ENCODE measurements at regions of chr12 and their contacts with region 1.

Region 1: DNA sequence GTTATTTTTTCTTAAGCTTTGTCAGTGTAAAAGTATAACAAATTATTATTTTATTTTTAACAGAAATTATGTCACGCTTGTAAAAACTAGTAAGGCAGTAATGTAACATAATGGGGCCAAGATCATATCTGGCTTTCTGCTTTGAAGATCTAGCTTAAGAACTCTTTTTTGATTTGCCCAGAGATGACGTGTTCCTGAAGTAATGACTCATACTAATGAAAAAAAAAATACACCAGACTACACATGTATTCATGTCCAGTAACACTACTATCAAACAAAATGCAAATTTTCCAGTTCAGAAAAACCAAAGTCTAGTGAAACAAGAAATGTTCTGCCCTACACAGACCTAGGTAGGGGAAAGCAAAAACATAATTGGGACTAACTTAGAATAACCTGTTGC is 432.2 kb upstream of the ATXN7L3B start:
- DNase-seq: no peak
- H3K4me3 ChIP-seq: no peak overlapping the region
- H3K27ac ChIP-seq: no peak overlapping the region
- H3K4me1 ChIP-seq: no peaks in the 10 kb centered on the region
- H3K27me3 ChIP-seq: no peaks in the 10 kb centered on the region
- CTCF ChIP-seq: no peak
- POLR2A ChIP-seq: no peak

Region 2: GRCh38 chr12:74144396-74144795 is 39.0 kb after region 1 on chr12:
- intact Hi-C with region 1: loop called (anchors 5 kb)
- DNase-seq: no peak
- H3K4me3 ChIP-seq: no peak overlapping the region
- H3K27ac ChIP-seq: no peak overlapping the region
- H3K4me1 ChIP-seq: no peaks in the 10 kb centered on the region
- H3K27me3 ChIP-seq: no peaks in the 10 kb centered on the region
- CTCF ChIP-seq: no peak
- POLR2A ChIP-seq: no peak

Region 3: DNA sequence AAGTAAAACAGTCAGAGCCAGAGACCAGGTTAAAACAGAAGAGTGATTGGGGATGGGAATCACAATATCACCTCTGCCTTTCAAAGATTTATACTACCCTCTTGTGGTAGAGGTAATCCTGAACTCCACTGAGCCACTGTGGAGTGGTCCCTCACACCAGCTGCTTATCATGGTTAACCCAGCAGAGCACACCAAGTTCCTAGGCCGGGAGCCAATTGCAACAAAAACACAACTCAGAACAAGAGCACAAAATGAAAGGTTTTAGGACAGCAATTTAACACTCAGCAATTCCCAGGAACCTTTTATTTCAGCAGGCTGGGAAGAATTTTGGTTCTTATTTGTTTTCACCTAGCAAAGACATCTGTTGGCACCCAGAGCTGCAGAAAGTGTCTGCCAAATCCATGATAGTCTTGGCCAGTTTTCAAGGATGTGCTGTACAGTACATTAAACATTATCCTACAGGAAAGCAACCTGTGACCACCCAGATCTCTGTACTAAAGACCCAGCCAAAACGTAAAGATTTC is 211.7 kb after region 1 on chr12:
- intact Hi-C with region 1: no loop called
- DNase-seq: no peak
- H3K4me3 ChIP-seq: no peak overlapping the region
- H3K27ac ChIP-seq: no peak overlapping the region
- H3K4me1 ChIP-seq: no peaks in the 10 kb centered on the region
- H3K27me3 ChIP-seq: no peaks in the 10 kb centered on the region
- CTCF ChIP-seq: no peak
- POLR2A ChIP-seq: no peak